Aorta (tissue), 5 donors: ENCODE measurements at regions of chr11 and their contacts with region 1.

Region 1: DNA sequence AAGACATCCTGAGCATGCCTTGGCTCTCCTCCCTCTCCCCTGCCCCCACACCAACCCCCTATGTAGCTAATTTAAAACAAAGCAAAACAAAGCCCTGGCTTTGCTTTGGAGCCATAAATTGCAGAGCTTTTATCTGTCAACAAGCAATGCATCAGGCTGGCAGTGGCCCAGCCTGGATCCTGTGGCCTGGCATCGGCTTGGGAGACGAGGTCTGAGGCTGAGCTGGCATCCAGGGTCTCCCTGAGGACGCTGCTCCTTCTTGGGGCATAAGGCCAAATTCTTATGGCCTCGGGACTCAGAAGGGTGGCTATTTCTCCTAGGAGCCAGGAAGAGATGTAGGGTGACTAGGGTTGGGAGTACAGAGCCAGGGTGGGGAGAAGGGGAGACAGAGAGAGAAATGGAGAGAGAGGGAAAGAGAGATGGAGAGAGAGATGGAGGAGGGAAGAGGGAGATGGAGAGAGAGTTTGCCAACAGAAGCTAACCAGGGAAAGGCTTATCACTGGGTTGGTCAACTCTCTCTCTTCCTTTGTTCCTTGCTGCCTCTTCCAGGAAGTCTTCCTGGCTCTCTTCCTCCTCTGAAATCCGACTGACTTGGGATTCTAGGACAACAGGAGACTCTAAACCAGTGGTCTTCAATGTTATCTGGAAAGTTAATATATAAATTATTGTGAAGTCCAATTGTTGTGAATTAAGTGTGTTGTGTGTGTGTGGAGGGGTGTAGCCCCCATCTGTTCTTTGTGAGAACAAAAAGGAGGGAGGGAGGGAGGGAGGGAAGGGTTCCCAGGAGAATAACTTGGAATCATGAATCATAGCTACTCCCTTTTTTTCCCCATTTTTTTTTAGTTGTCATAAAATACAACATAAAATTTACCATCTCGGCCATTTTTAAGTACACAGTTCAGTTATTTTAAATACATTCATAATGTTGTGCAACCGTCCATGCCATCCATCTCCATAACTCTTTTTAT is 29.1 kb downstream of the TSPAN18 start:
- DNase-seq: peak in 1 of 2 donors; percentile 84
- ATAC-seq: peak; percentile 28
- H3K4me3 ChIP-seq: no peak overlapping the region
- H3K27ac ChIP-seq: no peak overlapping the region
- H3K4me1 ChIP-seq: peaks cover 3 to 4% of the 10 kb centered on the region in 2 donors
- H3K27me3 ChIP-seq: no peaks in the 10 kb centered on the region

Region 2: GRCh38 chr11:44861849-44862749 is 106.3 kb after region 1 on chr11:
- intact Hi-C with region 1: loop called (anchors 5 to 10 kb)
- DNase-seq: peak; percentile 94 to 95
- ATAC-seq: peak; percentile 91
- H3K4me3 ChIP-seq: no peak overlapping the region
- H3K27ac ChIP-seq: peak overlapping the region; percentile 57 to 89
- H3K4me1 ChIP-seq: peaks cover 0 to 1% of the 10 kb centered on the region in 2 donors
- H3K27me3 ChIP-seq: no peaks in the 10 kb centered on the region